ENCODE measurements at regions of chr17 and their contacts with region 1.

Region 1: DNA sequence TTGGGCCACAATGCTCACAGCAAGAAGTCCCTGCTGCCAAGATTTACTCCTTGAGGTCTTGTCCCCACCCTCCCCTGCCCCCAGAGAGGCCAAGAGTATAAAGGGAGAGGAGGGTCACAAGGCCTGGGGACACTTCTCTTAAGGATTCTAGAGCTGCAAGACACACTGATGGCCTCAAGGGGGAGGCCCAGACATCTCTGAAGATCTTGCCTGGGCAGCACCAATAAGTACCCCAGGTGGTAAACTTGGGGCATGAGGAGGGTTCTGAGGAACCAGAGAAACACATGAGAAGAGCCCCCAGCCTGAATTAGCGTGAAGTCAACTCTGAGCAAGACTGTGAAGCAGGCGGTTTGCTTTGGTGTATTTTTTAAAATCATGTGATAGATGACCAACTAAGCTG is 26.8 kb upstream of the MTMR4 start:
- DNase-seq: no peak
- H3K4me3 ChIP-seq: no peak overlapping the region
- H3K27ac ChIP-seq: no peak overlapping the region
- H3K4me1 ChIP-seq: no peaks in the 10 kb centered on the region; a peak in 1 of 7 replicates
- H3K27me3 ChIP-seq: no peaks in the 10 kb centered on the region
- CTCF ChIP-seq: peak; percentile 61 to 65 (median 64)
- EP300 ChIP-seq: no peak
- POLR2A ChIP-seq: no peak
- RAD21 ChIP-seq: peak; percentile 64 to 69

Region 2: GRCh38 chr17:58377093-58377601 is 164.1 kb before region 1 on chr17:
- CTCF ChIA-PET with region 1: no interaction called
- POLR2A ChIA-PET with region 1: no interaction called
- DNase-seq: peak in 1 of 2 experiments; percentile 36
- H3K4me3 ChIP-seq: no peak overlapping the region
- H3K27ac ChIP-seq: no peak overlapping the region
- H3K4me1 ChIP-seq: peaks cover 6 to 15% (median 10%) of the 10 kb centered on the region in 4 experiments; a peak in 5 of 7 replicates
- H3K27me3 ChIP-seq: no peaks in the 10 kb centered on the region
- CTCF ChIP-seq: no peak
- EP300 ChIP-seq: no peak
- POLR2A ChIP-seq: no peak
- RAD21 ChIP-seq: no peak

Region 3: GRCh38 chr17:58492238-58493121 is 48.8 kb before region 1 on chr17:
- CTCF ChIA-PET with region 1: no interaction called
- POLR2A ChIA-PET with region 1: no interaction called
- DNase-seq: peak in 1 of 2 experiments; percentile 6
- H3K4me3 ChIP-seq: no peak overlapping the region
- H3K27ac ChIP-seq: no peak overlapping the region
- H3K4me1 ChIP-seq: no peaks in the 10 kb centered on the region
- H3K27me3 ChIP-seq: no peaks in the 10 kb centered on the region
- CTCF ChIP-seq: no peak
- EP300 ChIP-seq: no peak
- POLR2A ChIP-seq: no peak
- RAD21 ChIP-seq: no peak

Region 4: GRCh38 chr17:58556833-58557250 is 15.6 kb after region 1 on chr17:
- CTCF ChIA-PET with region 1: interaction called, 19 read pairs
- POLR2A ChIA-PET with region 1: no interaction called
- DNase-seq: no peak
- H3K4me3 ChIP-seq: no peak overlapping the region
- H3K27ac ChIP-seq: no peak overlapping the region
- H3K4me1 ChIP-seq: no peaks in the 10 kb centered on the region
- H3K27me3 ChIP-seq: no peaks in the 10 kb centered on the region
- CTCF ChIP-seq: no peak
- EP300 ChIP-seq: no peak
- POLR2A ChIP-seq: no peak
- RAD21 ChIP-seq: no peak

Region 5: GRCh38 chr17:58565780-58566189 is 24.5 kb after region 1 on chr17:
- CTCF ChIA-PET with region 1: interaction called, 10 read pairs
- POLR2A ChIA-PET with region 1: no interaction called
- DNase-seq: peak in 1 of 2 experiments; percentile 29
- H3K4me3 ChIP-seq: peak overlapping the region in 1 of 4 experiments; percentile 7; a peak in 1 of 8 replicates
- H3K27ac ChIP-seq: no peak overlapping the region
- H3K4me1 ChIP-seq: peaks cover 2 to 17% (median 12%) of the 10 kb centered on the region in 4 experiments; a peak in 6 of 7 replicates
- H3K27me3 ChIP-seq: no peaks in the 10 kb centered on the region
- CTCF ChIP-seq: no peak
- EP300 ChIP-seq: no peak
- POLR2A ChIP-seq: no peak
- RAD21 ChIP-seq: no peak

Region 6: DNA sequence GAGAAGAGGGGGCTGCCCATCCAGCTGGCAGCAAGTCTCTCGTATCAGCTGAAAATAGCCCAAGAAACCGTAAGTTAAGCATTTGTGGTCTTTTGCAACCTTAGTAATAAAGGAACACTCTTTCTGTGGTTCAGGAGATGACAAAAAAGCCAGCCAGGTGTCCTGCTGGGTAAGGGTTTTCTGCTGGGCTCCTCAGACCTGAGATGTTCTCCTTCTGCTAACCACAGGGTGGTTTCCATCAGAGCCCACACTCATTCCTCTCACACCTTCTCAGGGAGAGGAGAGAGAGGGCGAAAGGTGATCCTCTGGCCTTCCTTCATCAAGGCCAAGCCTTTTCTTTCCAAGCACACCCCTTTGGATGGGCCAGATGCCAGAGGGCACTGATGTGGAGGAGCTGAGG is 79.9 kb after region 1 on chr17:
- CTCF ChIA-PET with region 1: no interaction called
- POLR2A ChIA-PET with region 1: no interaction called
- DNase-seq: no peak
- H3K4me3 ChIP-seq: no peak overlapping the region
- H3K27ac ChIP-seq: no peak overlapping the region
- H3K4me1 ChIP-seq: no peaks in the 10 kb centered on the region
- H3K27me3 ChIP-seq: no peaks in the 10 kb centered on the region
- CTCF ChIP-seq: no peak
- EP300 ChIP-seq: no peak
- POLR2A ChIP-seq: no peak
- RAD21 ChIP-seq: no peak